Left cardiac atrium (tissue), 4 donors: ENCODE measurements at regions of chr5 and their contacts with region 1.

Region 1: GRCh38 chr5:31833005-31833404 is 194.1 kb downstream of the PDZD2 start:
- DNase-seq: no peak
- ATAC-seq: peak in 1 of 2 donors; percentile 25

Region 2: GRCh38 chr5:31886206-31886605 is 53.2 kb after region 1 on chr5:
- intact Hi-C with region 1: no loop called
- DNase-seq: no peak
- ATAC-seq: peak; percentile 14 to 64

Region 3: GRCh38 chr5:31935702-31936369 is 102.8 kb after region 1 on chr5:
- intact Hi-C with region 1: loop called in 1 of 2 experiments (anchors 10 kb)
- DNase-seq: no peak
- ATAC-seq: peak; percentile 67 to 79